Activated T-helper 2 cell treated with anti-CD3 and anti-CD28 coated beads, Interferon-gamma antibody, Interleukin-2, Interleukin-4, amounts not matched to agents 10 μg/mL and 5 μg/mL and 100 μg/mL, durations not matched to agents 14 hours and 24 hours and 36 hours (primary cell): ENCODE measurements at regions of chr17 and their contacts with region 1.

Region 1: DNA sequence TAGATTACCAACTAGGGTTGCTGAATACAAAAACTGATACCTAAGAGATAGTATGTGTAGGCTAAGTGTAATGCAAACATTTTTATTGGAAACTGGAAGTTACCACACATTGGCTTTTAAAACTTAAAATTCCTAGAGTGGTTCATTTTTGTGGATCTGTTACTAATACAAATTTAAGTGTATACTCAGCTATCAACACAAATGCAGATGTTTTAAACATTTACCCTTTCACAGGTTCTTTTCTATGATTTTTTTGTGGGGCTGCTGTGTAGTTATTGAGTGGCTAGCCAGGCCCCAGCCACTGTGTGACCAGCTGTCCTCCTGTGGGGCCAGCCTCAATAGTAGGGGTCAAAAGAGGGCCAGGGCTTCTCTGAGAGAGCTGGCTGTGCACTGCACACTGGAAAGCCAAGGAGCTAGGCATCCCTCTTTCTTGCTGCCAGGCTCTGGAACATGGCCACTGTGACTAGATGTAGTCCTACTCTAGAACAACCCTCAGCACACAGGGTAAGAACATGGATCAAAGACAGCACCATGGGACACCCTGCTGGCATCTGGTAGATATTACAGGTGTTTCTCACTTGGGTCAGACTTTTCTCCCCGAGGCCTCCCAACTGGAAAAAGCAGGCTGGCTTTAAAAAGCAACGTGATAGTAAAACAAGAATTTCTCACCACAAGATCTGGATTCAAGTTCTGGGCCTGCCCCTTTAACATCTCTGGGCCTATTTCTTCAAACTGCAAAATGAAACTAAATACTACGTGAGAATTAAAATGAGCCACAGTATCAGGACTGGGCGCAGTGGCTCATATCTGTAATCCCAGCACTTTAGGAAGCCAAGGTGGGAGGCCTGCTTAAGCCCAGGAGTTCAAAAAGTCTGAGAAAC is 7.3 kb upstream of the VEZF1 start:
- DNase-seq: peak; percentile 44
- H3K4me3 Mint-ChIP-seq: no peak overlapping the region
- H3K27ac Mint-ChIP-seq: peak overlapping the region; percentile 56
- H3K4me1 Mint-ChIP-seq: peaks cover 47% of the 10 kb centered on the region
- H3K27me3 Mint-ChIP-seq: no peaks in the 10 kb centered on the region

Region 2: DNA sequence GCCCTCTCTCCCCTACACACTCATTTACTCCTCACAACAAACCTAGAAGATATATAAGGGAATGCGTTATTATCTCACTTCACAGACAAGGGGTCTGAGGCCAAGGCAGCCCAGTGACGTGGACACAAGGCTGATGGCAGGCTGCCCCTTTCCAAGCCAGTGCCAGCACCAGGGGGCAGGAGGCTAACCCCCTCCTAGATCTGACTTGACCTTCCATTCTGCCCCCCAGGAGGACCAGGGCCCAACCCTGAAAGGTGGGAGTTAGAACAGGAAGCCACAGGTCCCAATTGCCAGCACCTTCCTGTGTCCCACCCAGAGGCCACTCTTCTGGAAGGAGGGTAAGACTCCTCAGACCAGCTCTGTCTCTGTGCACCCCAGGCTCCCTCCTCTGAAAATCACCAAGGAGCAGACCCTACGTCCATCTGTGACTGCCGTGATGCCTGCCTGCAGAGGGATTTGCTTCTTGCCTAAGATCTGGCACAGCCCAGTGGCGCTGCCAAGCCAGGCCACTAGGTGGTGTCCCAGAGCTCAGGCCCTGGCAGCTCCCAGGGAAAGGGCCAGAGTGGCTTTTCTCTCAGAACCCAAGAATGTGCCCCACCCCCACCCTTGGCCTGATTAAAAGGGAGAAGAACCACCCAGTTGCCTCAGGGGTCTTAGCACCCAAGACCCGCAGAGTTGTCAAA is 103.0 kb before region 1 on chr17:
- intact Hi-C with region 1: loop called (anchors 2 kb)
- DNase-seq: peak; percentile 66
- H3K4me3 Mint-ChIP-seq: no peak overlapping the region
- H3K27ac Mint-ChIP-seq: no peak overlapping the region
- H3K4me1 Mint-ChIP-seq: peaks cover 12% of the 10 kb centered on the region
- H3K27me3 Mint-ChIP-seq: peaks cover 4% of the 10 kb centered on the region

Region 3: DNA sequence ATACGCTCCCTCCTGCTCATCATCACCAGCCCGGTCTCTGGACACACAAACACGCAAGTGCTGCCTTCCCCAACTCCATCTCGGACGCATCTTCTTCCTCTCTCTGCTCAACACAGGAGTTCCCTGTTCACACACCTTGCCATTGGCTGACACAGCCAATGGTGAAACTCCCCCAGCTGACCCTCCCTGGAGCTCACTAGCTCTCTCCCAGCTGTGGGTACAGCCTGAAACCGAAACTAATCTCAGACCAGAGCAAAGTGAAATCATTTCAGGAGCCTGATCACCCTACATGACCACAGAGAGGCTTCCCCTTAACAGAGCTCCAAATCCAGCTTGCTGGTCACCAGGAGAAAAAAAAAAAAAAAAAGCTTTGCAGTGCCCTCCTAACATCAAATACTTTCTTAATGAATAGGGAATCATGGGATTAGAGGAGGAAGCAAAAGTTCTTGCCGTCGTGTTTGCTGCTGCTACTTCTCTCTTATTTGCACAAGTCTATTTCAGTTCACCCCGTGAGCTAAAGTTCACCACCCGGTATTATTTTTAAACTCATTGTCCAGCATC is 48.4 kb before region 1 on chr17:
- intact Hi-C with region 1: loop called (anchors 10 kb)
- DNase-seq: peak; percentile 39
- H3K4me3 Mint-ChIP-seq: peak overlapping the region; percentile 31
- H3K27ac Mint-ChIP-seq: no peak overlapping the region
- H3K4me1 Mint-ChIP-seq: peaks cover 30% of the 10 kb centered on the region
- H3K27me3 Mint-ChIP-seq: peaks cover 33% of the 10 kb centered on the region

Region 4: DNA sequence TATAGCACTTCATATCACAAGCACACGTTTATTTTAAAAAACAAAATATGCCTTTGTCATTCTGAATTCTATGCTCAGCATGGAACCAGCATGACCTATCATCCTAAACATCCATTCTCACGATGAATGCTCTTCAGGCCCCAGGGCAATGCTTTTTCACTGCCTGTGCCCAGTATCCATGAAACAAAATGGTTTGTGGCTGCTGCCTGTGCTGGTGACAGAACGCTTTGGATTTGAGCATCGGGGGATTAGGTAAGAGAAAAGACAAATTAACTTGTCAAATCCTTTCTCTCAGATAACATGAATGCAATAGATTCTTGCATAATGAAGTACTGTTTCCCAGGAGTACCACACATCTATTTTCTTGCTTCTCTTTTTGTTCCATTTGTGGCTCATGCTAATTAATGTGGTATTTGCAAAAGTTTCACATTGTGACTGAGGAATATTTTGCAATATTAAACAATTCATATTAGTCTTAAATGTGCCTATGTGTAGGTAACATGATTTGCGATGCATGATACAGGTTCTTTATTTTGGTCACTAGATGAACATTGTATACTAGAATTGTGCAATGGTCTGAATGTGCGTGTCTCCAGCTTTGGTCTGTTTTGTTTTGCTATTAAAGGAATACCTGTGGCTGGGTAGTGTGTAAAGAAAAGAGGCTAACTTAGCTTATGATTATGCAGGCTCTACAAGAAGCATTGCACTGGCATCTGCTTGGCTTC is 37.5 kb after region 1 on chr17:
- intact Hi-C with region 1: no loop called
- DNase-seq: no peak
- H3K4me3 Mint-ChIP-seq: no peak overlapping the region
- H3K27ac Mint-ChIP-seq: no peak overlapping the region
- H3K4me1 Mint-ChIP-seq: no peaks in the 10 kb centered on the region
- H3K27me3 Mint-ChIP-seq: peaks cover 19% of the 10 kb centered on the region

Region 5: DNA sequence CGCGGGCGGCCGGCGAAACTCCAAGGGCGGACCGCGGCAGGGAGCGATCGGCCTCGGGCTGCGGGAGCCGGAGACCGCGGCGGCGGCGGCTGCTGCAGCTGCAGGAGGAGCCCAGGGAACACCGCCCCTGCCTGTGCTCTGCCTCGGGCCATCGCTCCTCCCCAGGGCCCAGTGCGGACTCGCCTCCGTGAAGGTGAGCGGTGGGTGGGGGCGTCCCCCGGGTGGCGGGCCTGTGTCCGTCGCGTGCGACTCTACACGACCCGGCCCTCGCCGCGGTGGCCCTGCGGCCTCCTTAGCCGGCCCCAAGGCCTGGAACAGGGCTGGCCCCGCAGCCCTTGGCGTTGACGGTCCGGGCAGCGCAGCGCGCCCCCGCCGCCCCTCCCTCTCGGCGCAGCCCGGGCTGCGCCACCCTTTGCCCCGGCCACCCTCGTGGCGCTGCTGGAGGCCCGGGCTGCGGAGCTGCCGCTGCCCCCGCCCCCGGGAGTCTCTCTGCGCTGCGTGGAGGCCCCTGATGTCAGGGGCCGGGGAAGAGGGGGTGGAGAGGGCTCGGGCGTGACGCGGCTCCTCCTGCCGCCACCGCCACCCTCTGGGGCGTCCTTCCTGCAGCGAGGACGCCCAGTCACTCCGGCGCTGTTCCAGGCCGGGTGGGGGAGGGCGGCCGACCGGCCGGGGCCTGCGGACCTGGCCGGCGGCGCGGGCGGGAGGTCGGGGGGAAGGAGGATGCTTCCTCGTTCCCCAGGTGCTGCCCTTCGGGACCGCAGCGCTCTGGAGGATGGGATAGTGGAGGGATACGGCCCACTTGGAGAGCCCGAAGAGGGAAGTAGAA is 88.4 kb after region 1 on chr17:
- intact Hi-C with region 1: loop called (anchors 5 kb)
- DNase-seq: peak; percentile 60
- H3K4me3 Mint-ChIP-seq: peak overlapping the region; percentile 85
- H3K27ac Mint-ChIP-seq: peak overlapping the region; percentile 59
- H3K4me1 Mint-ChIP-seq: peaks cover 25% of the 10 kb centered on the region
- H3K27me3 Mint-ChIP-seq: peaks cover 20% of the 10 kb centered on the region

Region 6: DNA sequence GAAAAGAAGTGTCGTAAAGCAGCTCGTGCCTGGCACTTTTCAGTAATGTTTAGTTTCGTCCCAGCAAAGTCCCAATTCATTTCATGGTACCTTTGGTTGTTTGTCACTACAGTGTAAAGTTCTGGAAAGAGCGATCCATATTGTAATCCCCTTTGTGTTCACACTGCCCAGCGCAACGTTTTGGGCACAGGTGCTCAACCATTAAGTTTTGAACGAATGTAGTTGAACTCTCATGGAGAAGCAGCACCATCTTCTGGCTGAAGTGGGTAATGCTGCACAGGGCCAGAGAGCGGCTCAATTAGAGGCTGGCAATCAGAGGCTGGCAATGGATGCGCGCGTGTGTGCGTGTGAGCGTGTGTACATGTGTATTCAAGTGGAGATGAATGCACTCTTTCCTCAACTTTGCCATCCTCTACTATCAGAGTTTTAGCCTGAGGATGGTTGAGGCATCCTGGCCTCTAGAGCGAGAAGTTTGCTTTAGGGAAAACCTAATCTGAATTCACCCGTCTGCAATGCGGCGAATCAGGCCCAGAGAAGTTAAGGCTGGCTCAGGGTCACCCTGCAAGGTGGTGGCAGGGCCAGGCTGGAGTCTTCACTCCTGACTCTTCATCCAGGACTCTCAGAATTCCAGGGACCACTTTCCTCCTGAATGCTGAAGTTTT is 117.8 kb after region 1 on chr17:
- intact Hi-C with region 1: loop called (anchors 5 kb)
- DNase-seq: peak; percentile 71
- H3K4me3 Mint-ChIP-seq: no peak overlapping the region
- H3K27ac Mint-ChIP-seq: no peak overlapping the region
- H3K4me1 Mint-ChIP-seq: no peaks in the 10 kb centered on the region
- H3K27me3 Mint-ChIP-seq: peaks cover 10% of the 10 kb centered on the region